ENCODE measurements at regions of chr3 and their contacts with region 1.

Region 1: DNA sequence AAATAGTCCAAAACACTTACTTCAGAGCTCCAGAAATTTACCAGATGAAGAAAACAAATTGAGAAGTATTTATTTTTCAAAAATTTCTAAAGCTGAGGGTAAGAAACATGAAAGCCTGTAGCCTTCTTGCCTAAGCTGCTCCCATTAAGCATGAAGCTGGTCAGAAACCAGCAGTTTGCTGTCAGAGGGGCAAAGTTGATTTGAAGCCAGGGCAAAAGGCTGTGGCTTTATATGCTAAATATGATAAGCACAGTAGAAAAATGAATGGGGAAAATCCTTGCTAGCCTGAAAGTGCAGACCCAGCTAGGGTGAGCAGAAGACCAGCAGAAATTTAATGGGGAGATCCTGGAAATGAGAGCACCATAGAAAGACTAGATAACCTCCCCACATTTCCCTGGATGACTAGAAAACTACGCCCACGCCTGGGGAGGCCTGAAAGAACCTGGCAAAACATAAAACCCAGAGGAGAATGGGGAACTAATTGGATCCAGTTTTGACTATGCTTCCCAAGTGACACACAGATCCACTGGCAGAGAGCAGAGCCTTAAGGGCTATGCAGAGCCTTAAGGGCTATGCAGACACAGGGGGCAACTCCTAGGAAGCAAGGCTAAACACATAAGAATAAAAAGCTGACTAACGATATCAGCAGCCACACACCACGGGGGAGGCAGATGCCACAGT is 43.0 kb upstream of the HEG1 start:
- DNase-seq: no peak
- ATAC-seq: no peak
- H3K4me3 ChIP-seq: no peak overlapping the region
- H3K27ac ChIP-seq: peak overlapping the region; percentile 45; the same call in 1 of the 2 replicates
- H3K4me1 ChIP-seq: peaks cover 4% of the 10 kb centered on the region; the same call in 1 of the 2 replicates
- H3K27me3 ChIP-seq: no peaks in the 10 kb centered on the region
- CTCF ChIP-seq: no peak

Region 2: DNA sequence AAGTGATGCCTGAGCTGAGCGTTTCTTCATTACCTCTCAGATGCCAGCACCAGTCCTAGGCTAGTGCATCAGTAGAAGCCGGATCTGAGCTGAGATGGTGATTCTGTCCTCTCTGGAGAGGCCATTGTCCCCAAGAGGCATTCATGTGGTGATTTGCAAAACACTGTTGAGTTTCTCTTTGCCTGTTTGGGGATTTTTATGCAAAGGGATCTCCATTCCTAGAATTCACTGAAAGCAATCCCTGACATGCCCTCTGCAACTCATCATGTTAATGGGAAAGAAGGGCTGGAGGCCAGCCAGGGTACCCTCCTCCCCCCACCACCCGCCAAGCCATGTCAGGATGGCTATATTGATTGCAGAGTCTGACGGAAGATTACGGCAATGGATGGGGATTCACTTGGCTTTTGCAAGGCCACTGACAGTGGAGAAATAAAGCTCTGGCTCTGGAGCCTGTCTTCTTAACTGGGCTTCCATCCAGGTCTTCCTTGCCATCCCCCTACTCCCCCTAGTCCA is 940.3 kb before region 1 on chr3:
- CTCF ChIA-PET with region 1: no interaction called
- POLR2A ChIA-PET with region 1: no interaction called
- in situ Hi-C with region 1: no loop called
- intact Hi-C with region 1: no loop called
- DNase-seq: no peak
- ATAC-seq: no peak
- H3K4me3 ChIP-seq: no peak overlapping the region
- H3K27ac ChIP-seq: no peak overlapping the region
- H3K4me1 ChIP-seq: no peaks in the 10 kb centered on the region
- H3K27me3 ChIP-seq: peaks cover 45% of the 10 kb centered on the region
- CTCF ChIP-seq: no peak

Region 3: GRCh38 chr3:124747111-124747981 is 351.4 kb before region 1 on chr3:
- CTCF ChIA-PET with region 1: no interaction called
- POLR2A ChIA-PET with region 1: no interaction called
- in situ Hi-C with region 1: no loop called
- intact Hi-C with region 1: no loop called
- DNase-seq: no peak
- ATAC-seq: peak; percentile 55; the same call in 1 of the 2 replicates
- H3K4me3 ChIP-seq: no peak overlapping the region
- H3K27ac ChIP-seq: no peak overlapping the region
- H3K4me1 ChIP-seq: no peaks in the 10 kb centered on the region
- H3K27me3 ChIP-seq: no peaks in the 10 kb centered on the region
- CTCF ChIP-seq: no peak

Region 4: DNA sequence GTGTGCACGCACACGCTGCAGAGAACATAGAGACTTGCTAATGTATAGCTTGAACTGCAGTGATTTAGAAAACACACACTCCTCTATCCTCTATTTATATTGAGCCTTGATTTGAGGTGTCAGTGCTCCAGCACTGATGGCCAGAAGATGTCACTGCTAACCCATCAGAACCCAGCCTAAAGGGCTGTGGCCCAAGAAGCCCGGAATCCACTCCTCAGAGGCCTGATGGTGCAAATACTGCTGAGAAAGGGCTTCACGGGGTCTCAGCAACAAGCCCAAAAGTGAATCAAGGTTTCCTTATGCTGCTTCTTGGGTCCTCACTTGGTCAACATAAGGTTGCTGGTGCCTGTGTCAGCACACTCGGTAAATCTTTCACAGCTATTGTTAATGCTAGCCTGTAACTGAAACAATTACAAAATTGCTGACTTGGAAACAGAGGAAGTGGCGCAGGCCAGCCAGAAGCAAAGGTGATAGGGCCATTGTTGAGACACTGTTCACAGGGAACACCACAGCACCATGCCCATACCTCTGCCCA is 103.2 kb before region 1 on chr3:
- CTCF ChIA-PET with region 1: no interaction called
- POLR2A ChIA-PET with region 1: no interaction called
- in situ Hi-C with region 1: no loop called
- intact Hi-C with region 1: no loop called
- DNase-seq: peak; percentile 27
- ATAC-seq: peak; percentile 90
- H3K4me3 ChIP-seq: no peak overlapping the region
- H3K27ac ChIP-seq: peak overlapping the region; percentile 25; the same call in 1 of the 2 replicates
- H3K4me1 ChIP-seq: peaks cover 14% of the 10 kb centered on the region; the same call in 1 of the 2 replicates
- H3K27me3 ChIP-seq: no peaks in the 10 kb centered on the region
- CTCF ChIP-seq: peak; percentile 85

Region 5: GRCh38 chr3:125110016-125110875 is 11.5 kb after region 1 on chr3:
- CTCF ChIA-PET with region 1: interaction called, 10 read pairs
- POLR2A ChIA-PET with region 1: no interaction called
- in situ Hi-C with region 1: no loop called
- intact Hi-C with region 1: no loop called
- DNase-seq: no peak
- ATAC-seq: peak; percentile 44
- H3K4me3 ChIP-seq: no peak overlapping the region
- H3K27ac ChIP-seq: peak overlapping the region; percentile 62; the same call in 1 of the 2 replicates
- H3K4me1 ChIP-seq: peaks cover 32% of the 10 kb centered on the region
- H3K27me3 ChIP-seq: no peaks in the 10 kb centered on the region
- CTCF ChIP-seq: no peak

Region 6: GRCh38 chr3:125202197-125202596 is 103.4 kb after region 1 on chr3:
- CTCF ChIA-PET with region 1: no interaction called
- POLR2A ChIA-PET with region 1: no interaction called
- in situ Hi-C with region 1: no loop called
- intact Hi-C with region 1: no loop called
- DNase-seq: no peak
- ATAC-seq: peak; percentile 91
- H3K4me3 ChIP-seq: no peak overlapping the region
- H3K27ac ChIP-seq: no peak overlapping the region
- H3K4me1 ChIP-seq: no peaks in the 10 kb centered on the region
- H3K27me3 ChIP-seq: no peaks in the 10 kb centered on the region
- CTCF ChIP-seq: peak; percentile 72

Region 7: DNA sequence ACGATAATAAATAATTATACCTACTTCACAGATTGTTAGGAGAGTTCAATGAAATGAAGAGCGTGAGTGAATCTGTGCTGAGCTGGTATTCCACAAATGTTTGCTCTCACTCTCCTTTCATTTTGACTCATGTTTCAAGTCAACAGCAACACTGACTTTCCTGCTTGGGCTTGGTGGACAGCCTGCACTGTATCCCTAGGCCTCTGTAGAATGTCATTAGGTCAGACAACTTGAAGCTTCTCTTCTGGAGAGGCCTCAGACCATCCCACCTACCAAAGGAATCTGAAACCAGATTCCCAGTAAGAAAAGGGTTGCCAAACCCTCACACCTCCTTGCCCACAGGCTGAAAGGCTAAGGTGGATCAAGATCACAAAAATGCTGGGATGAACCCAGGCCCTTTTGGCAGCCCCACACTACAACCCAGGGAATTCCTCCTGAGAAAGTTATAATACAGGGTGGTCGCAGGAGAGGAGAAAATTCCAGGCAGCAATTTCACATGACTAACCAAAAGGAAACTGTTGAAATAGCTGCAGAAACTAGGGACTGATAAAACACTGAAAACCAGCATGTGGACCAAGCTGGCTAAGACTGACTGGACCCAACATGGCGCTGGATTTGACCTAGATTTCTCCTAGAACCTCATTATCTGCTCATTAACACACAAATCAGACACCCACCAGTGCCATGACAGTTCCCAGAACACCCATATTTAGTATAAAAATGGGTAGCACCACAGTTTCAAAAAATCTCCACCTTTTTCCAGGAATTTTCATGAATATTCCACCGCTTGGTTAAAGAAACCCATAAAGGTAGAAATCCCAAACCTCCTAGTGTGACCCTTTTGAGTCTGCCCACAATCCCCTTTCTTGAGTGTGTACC is 333.4 kb after region 1 on chr3:
- CTCF ChIA-PET with region 1: no interaction called
- POLR2A ChIA-PET with region 1: interaction called, 14 read pairs
- in situ Hi-C with region 1: no loop called
- intact Hi-C with region 1: no loop called
- DNase-seq: no peak
- ATAC-seq: no peak
- H3K4me3 ChIP-seq: no peak overlapping the region
- H3K27ac ChIP-seq: no peak overlapping the region
- H3K4me1 ChIP-seq: no peaks in the 10 kb centered on the region
- H3K27me3 ChIP-seq: no peaks in the 10 kb centered on the region
- CTCF ChIP-seq: no peak

Measured in Panc1 (cell line).